ENCODE measurements at regions of chr11 and their contacts with region 1.

Region 1: DNA sequence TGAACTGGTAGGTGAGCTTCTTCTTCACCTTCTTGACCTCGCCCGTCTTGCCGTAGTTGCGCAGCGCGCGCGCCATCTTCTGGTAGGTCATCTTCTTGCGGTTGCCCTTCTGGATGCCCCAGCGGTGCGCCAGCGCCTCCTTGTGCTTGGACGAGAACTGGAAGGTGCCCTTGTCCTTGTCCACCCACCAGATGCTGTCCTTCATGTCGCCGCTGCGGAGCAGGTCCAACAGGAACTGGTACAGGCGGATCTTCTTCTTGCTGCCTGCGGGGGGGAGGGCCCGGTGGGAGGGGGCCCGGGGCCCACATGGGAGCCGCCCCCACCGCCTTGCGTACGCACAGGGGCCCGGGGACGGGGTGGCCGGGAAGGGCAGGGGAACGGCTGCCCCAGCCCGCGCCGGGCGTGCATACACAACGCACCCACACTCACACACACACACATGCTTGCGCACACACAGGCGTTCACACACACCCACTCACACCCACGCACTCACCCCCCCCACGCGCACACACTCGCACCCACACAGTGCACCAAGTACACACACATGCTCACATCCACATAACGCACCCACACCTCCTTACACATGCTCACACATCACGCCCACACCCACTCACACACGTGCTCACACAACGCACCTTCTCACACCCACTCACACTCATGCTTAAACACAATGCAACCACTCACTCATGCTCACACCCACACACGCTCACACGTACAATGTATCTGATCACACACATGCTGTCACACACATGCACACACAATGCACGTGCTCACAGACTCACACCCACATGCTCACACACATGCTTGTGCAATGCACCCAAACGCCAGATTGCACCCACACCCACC is 3.0 kb upstream of the MYBPC3 start:
- DNase-seq: peak; percentile 80
- ATAC-seq: peak; percentile 39
- H3K4me3 Mint-ChIP-seq: no peak overlapping the region
- H3K27ac Mint-ChIP-seq: no peak overlapping the region
- H3K4me1 Mint-ChIP-seq: peaks cover 12% of the 10 kb centered on the region
- H3K27me3 Mint-ChIP-seq: no peaks in the 10 kb centered on the region

Region 2: GRCh38 chr11:46889689-46890475 is 465.6 kb before region 1 on chr11:
- CTCF ChIA-PET with region 1: no interaction called
- POLR2A ChIA-PET with region 1: no interaction called
- intact Hi-C with region 1: loop called in 1 of 2 experiments (anchors 10 kb)
- DNase-seq: peak; percentile 83
- ATAC-seq: peak; percentile 86
- H3K4me3 Mint-ChIP-seq: no peak overlapping the region
- H3K27ac Mint-ChIP-seq: no peak overlapping the region
- H3K4me1 Mint-ChIP-seq: peaks cover 2% of the 10 kb centered on the region
- H3K27me3 Mint-ChIP-seq: no peaks in the 10 kb centered on the region

Measured in activated CD4-positive, alpha-beta T cell treated with anti-CD3 and anti-CD28 coated beads for 36 hours (primary cell).